GM10248 (cell line): ENCODE measurements at regions of chr3 and their contacts with region 1.

Region 1: DNA sequence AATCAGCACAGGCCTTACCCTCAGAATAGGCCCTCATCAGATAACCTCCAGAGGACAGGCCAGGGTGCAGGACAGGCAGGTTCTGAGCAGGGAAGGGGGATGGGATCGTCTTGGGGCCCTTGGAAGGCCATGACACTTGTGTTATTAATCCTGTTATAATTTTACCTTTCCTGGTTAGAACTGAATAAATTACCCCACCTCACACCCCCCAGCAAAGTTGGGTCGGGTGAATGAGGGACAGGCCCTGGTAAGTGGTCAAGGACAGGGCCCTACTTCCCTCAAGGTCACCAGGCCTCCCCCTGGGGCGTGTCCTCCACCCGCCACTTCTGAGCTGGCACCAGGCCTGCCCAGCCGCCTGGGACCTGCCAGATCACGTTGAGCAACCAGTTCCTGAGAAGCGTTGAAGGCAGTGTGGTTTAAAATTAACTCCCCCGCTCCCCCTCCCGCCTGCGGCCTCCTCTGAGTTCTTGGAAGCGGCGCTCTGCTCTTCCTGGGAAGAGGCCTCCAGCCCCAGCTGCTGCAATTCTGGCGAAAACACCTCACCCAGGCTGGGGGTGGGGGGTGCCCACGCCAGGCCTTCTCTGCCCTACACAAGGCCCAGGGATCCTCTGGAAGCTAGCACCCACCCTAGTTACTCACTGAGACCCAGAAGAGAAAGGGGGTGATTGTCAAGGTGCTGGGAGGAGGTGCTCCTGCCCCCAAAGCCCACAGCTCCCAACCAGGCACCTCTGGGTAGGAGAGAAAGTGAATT is 10.6 kb downstream of the CISH start:
- DNase-seq: peak; percentile 68
- CTCF ChIP-seq: no peak

Region 2: DNA sequence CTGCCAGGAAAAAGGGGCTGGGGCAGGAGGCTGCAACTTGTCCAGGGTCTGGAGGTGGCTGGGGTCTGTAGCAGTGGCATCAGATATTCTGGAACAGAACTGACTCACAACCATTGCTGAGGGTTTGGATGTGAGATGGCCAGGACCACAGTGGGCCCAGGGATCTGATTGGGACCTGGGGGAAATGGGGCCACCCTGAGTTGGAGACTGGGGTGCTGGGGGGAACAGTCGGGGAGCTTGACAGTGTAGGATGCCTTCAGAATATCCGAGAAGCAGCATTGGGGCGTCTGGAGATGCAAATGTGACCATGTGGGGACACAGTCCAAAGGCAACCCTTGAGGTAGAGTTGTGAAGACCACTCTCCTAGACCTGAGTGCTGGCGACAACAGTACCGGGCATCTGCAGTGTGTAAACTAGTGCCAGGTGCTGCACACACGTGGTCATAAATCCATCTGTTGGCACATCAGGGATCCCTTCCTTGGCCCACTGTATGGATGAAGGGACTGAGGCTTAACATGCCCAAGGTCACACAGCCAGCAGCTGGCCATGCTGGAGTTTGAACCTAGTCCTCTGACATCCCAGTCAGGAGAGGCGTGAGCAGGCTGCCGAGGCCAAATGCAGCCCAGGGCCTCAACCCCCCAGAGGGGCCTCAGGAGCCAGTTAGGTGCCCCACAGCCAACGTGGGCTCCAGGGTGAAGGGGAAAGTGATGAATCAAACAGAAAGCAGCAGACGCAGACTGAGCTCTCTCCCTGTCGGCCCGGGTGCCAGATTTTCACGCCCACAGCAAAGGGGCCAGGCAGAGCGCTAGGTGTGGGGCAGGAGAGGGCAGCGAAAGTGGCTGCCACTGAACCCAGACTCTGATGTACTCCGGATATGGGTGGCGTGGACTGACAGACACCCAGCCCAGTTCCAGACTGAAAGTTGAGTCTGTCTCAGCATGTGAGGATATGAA is 12.9 kb before region 1 on chr3:
- CTCF ChIA-PET with region 1: interaction called, 266 read pairs
- POLR2A ChIA-PET with region 1: interaction called, 3 read pairs
- DNase-seq: peak; percentile 69
- CTCF ChIP-seq: no peak